ENCODE measurements at regions of chr19 and their contacts with region 1.

Region 1: GRCh38 chr19:10095948-10096621 is 6.4 kb downstream of the ANGPTL6 start:
- DNase-seq: peak; percentile 65 to 92 (median 86)
- H3K4me3 ChIP-seq: peak overlapping the region; percentile 25 to 78 (median 63)
- H3K27ac ChIP-seq: peak overlapping the region in 58 of 59 donors; percentile 60 to 96 (median 87)
- H3K27me3 ChIP-seq: no peaks in the 10 kb centered on the region
- CTCF ChIP-seq: peak in 10 of 56 donors; percentile 3 to 39 (median 12)

Region 2: DNA sequence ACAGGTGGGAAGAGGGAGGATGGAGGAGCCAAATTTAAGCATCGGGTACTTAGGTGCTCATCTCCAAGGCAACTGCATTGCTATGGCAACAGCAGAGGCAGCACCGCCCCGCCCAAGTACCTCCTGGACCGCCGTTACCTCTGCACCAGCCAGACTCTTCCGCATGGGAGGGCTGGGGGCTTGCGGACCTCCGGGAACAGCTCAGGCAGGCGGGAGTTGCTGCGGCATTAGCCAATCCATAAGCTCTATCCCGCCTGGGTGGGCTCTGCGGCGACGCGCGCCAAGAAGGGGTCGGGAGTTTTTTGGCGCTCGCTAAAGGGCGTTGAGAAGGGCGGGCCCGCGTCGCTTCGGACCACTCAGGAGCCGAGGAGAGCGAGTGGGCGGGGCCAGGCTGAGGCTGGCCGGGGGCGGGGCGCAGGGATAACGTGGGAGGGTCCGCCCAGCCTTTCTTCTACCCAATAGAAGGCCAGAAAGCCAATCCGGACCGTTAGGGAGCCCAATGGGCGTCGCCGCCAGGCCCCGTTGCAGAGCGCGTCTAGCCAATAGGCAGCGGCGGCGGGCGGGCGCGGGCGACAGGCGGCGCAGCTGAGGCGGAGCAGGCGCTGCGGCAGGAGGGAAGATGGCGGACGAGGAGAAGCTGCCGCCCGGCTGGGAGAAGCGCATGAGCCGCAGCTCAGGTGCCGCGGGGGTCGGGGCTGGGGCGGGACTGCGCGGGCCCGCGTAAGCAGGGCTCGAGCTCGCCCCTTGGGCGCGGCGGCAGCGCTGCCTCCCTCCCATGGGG is 261.2 kb before region 1 on chr19 and contains the start of gene PIN1:
- intact Hi-C with region 1: loop called in 1 of 2 experiments (anchors 5 kb)
- DNase-seq: peak; percentile 97 to 99 (median 99)
- H3K4me3 ChIP-seq: peak within 1 kb of the TSS; percentile 68 to 100 (median 97)
- H3K27ac ChIP-seq: peak within 1 kb of the TSS in 54 of 59 donors; percentile 31 to 92 (median 79)
- H3K27me3 ChIP-seq: no peaks in the 10 kb centered on the region
- CTCF ChIP-seq: peak; percentile 32 to 90 (median 74)
- total RNA-seq, gene PIN1: 108 to 307 (median 215) TPM